ENCODE measurements at regions of chrX and their contacts with region 1.

Region 1: DNA sequence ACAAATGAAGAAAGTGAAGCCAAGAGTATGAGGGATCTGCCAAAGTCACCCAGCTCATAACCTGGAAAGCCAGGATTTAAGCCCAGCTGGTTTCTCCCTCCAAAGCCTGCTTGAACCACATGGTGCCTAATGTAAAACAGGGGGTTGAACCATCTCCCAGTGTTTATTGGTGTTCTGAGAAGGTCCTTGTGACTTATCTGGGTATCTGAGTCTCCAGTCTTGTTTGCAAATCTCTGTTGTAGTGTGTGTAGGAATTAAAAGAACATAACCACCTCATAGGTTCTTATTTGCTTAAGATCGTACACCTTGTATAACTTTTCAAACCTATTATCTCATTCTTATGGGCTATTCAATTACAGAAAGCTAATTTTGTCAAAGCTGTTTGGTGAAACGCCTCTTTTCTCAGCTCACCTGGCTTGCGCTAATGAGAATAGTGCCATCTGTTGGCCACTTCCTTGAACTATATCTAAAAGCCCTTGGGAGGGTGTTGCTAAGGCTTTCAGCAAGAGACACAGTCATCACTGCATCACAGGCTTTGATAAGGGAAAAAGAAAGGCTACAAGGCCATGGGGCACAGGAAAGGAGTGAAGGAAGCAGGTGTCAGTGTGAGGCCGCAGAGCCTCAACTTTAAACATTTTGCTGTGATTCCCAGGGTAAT is 34.0 kb downstream of the ETDB start:
- DNase-seq: peak in 2 of 6 donors; percentile 24 to 58
- ATAC-seq: peak; percentile 90 to 99 (median 97)
- H3K4me3 ChIP-seq: no peak overlapping the region
- H3K27ac ChIP-seq: no peak overlapping the region
- H3K4me1 ChIP-seq: no peaks in the 10 kb centered on the region
- H3K27me3 ChIP-seq: peaks cover 0 to 5% (median 0%) of the 10 kb centered on the region in 4 donors
- CTCF ChIP-seq: peak; percentile 16 to 59 (median 56)

Region 2: DNA sequence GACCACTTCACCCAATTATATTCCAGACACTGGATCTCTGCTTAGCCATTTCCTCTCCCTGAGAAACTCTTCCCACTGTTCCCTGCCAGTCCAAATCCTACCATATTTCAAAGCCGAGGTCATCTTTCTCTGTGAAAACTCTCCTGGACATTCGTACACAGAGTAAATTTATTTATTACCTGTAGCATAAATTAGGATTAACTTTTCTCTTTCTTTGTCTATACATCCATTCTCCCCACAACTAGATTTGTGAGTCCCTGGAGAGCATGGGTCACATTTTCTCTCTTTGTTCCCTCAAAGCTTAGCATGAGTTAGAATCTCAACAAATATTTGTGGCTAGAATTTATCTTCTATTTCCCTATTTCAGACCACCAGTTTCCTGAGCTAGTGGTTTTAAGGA is 123.3 kb before region 1 on chrX:
- intact Hi-C with region 1: loop called in 2 of 3 experiments (anchors 5 kb)
- DNase-seq: no peak
- ATAC-seq: no peak
- H3K4me3 ChIP-seq: no peak overlapping the region
- H3K27ac ChIP-seq: no peak overlapping the region
- H3K4me1 ChIP-seq: no peaks in the 10 kb centered on the region
- H3K27me3 ChIP-seq: peaks cover 0 to 4% (median 0%) of the 10 kb centered on the region in 4 donors
- CTCF ChIP-seq: no peak

Region 3: GRCh38 chrX:134969726-134970125 is 116.6 kb before region 1 on chrX:
- intact Hi-C with region 1: loop called in 2 of 3 experiments (anchors 5 kb)
- DNase-seq: no peak
- ATAC-seq: no peak
- H3K4me3 ChIP-seq: no peak overlapping the region
- H3K27ac ChIP-seq: no peak overlapping the region
- H3K4me1 ChIP-seq: no peaks in the 10 kb centered on the region
- H3K27me3 ChIP-seq: peaks cover 0 to 4% (median 0%) of the 10 kb centered on the region in 4 donors
- CTCF ChIP-seq: no peak